ENCODE measurements at regions of chr5 and their contacts with region 1.

Region 1: DNA sequence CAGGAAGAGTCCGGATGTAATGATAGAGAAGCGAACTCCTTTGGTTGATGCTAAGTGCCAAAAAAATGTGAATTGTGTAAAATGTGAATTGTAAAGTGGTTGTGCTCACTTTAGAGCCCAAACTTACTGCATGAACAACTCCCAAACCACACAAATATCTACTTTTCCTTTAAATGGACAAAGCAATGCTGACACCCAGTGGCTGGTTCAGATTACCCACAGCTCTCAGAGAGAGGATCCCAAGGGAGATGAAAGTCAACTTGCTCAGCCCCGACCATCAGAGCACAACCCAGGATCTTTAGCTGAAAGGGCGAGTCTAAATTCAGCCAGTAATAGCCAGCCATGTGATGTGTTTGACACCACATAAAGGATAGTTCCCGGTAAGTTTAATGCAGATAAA is 133.7 kb downstream of the NMUR2 start:
- DNase-seq: peak in 1 of 2 donors; percentile 46
- ATAC-seq: peak; percentile 50 to 79 (median 74)
- H3K4me3 ChIP-seq: no peak overlapping the region
- H3K27ac ChIP-seq: peak overlapping the region in 1 of 10 donors; percentile 52
- H3K4me1 ChIP-seq: peaks cover 8 to 50% (median 30%) of the 10 kb centered on the region in 9 donors
- H3K27me3 ChIP-seq: no peaks in the 10 kb centered on the region
- CTCF ChIP-seq: peak; percentile 16 to 69 (median 54)

Region 2: DNA sequence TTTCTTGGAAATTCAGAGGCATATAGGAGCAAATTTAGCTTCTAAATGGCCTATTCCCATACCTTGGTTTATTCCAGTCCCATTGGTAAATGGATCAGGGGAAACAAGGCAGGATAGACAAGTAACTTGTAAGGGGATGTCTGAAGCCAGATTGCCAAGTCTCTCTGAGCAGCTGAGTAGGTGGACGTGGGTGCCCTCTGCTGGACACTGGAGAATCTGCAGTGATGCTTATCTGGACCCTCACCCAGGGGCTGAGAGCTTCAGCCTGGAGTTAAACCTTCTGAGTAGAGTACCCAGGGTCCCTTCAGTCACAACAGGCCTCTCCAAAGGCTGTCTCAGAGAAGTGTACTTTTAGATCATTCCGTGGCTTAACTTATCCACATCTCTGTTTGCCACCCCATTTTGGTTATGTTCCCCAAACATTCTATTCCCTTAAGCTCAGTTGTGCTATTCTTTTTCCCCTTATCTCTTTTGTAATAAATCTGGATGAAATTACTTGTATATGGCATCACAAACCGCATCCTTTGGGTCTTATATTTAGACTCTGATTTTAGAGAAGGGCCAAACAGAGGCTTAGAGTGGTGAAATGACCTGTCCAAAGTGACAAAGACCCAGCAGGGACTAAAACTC is 128.5 kb before region 1 on chr5:
- intact Hi-C with region 1: loop called in 3 of 10 experiments (anchors 2 to 5 kb)
- DNase-seq: peak; percentile 29 to 40
- ATAC-seq: peak in 7 of 8 donors; percentile 55 to 83 (median 64)
- H3K4me3 ChIP-seq: no peak overlapping the region
- H3K27ac ChIP-seq: no peak overlapping the region
- H3K4me1 ChIP-seq: peaks cover 0 to 5% (median 0%) of the 10 kb centered on the region in 9 donors
- H3K27me3 ChIP-seq: peaks cover 0 to 4% (median 0%) of the 10 kb centered on the region in 7 donors
- CTCF ChIP-seq: peak; percentile 66 to 92 (median 87)

Region 3: DNA sequence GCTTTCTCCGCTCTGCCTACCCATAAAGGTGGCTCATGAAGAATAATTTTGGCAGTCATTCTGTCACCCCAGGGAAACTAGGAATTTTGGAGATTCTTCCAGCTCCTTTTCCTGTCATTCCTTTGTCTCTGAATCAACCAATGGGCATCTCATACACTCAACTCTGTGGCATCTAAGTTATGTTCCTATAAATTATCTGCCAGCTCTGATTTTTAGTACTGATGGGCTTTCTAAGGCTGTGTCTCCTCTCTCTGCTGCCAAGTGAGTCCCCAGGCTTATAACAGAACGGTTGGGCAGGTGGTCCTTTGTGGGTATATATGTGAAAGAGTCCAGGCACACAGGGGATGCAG is 93.1 kb before region 1 on chr5:
- intact Hi-C with region 1: no loop called
- DNase-seq: no peak
- ATAC-seq: no peak
- H3K4me3 ChIP-seq: no peak overlapping the region
- H3K27ac ChIP-seq: no peak overlapping the region
- H3K4me1 ChIP-seq: no peaks in the 10 kb centered on the region
- H3K27me3 ChIP-seq: no peaks in the 10 kb centered on the region
- CTCF ChIP-seq: no peak

Region 4: GRCh38 chr5:152332716-152333460 is 61.5 kb after region 1 on chr5:
- intact Hi-C with region 1: loop called in 1 of 10 experiments (anchors 5 kb)
- DNase-seq: no peak
- ATAC-seq: no peak
- H3K4me3 ChIP-seq: no peak overlapping the region
- H3K27ac ChIP-seq: no peak overlapping the region
- H3K4me1 ChIP-seq: peaks cover 0 to 9% (median 0%) of the 10 kb centered on the region in 9 donors
- H3K27me3 ChIP-seq: no peaks in the 10 kb centered on the region
- CTCF ChIP-seq: no peak

Region 5: GRCh38 chr5:152372875-152373274 is 101.5 kb after region 1 on chr5:
- intact Hi-C with region 1: no loop called
- DNase-seq: no peak
- ATAC-seq: no peak
- H3K4me3 ChIP-seq: no peak overlapping the region
- H3K27ac ChIP-seq: no peak overlapping the region
- H3K4me1 ChIP-seq: peaks cover 0 to 2% (median 0%) of the 10 kb centered on the region in 9 donors
- H3K27me3 ChIP-seq: no peaks in the 10 kb centered on the region
- CTCF ChIP-seq: no peak

Region 6: DNA sequence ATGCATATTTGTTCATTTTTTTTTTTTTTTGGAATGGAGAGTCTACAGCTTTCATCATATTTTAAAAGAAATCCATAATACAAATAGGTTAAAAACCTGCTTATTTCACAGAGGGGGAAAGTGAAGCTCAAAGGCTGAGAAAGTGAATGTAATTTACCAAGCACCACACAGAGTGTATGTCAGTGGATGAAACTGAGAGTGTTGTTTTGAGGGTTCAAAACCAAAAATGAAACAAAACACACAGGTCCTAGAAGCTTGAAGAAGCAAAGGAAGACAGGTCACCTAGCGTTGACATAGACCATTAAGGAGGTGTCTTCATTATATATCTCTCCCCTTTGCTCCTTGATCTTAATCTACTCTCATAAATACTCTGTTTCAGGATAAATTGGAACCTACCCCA is 126.2 kb after region 1 on chr5:
- intact Hi-C with region 1: no loop called
- DNase-seq: no peak
- ATAC-seq: no peak
- H3K4me3 ChIP-seq: no peak overlapping the region
- H3K27ac ChIP-seq: no peak overlapping the region
- H3K4me1 ChIP-seq: no peaks in the 10 kb centered on the region
- H3K27me3 ChIP-seq: no peaks in the 10 kb centered on the region
- CTCF ChIP-seq: no peak

Region 7: GRCh38 chr5:152514827-152515397 is 243.5 kb after region 1 on chr5:
- intact Hi-C with region 1: loop called in 2 of 10 experiments (anchors 5 to 10 kb)
- DNase-seq: no peak
- ATAC-seq: peak in 1 of 8 donors; percentile 31
- H3K4me3 ChIP-seq: no peak overlapping the region
- H3K27ac ChIP-seq: no peak overlapping the region
- H3K4me1 ChIP-seq: peaks cover 0 to 15% (median 0%) of the 10 kb centered on the region in 9 donors
- H3K27me3 ChIP-seq: peaks cover 0 to 3% (median 0%) of the 10 kb centered on the region in 7 donors
- CTCF ChIP-seq: peak in 7 of 9 donors; percentile 27 to 59 (median 42)